Endothelial cell of umbilical vein (primary cell): ENCODE measurements at regions of chr1 and their contacts with region 1.

Region 1: GRCh38 chr1:21931171-21932093 is 5.7 kb downstream of the HSPG2 start:
- DNase-seq: peak; percentile 70
- H3K4me3 ChIP-seq: peak overlapping the region in 2 of 3 experiments; percentile 71 to 88
- H3K27ac ChIP-seq: peak overlapping the region; percentile 81
- H3K4me1 ChIP-seq: peaks cover 70% of the 10 kb centered on the region
- H3K27me3 ChIP-seq: no peaks in the 10 kb centered on the region
- CTCF ChIP-seq: no peak
- POLR2A ChIP-seq: no peak

Region 2: GRCh38 chr1:21901473-21901847 is 30.0 kb before region 1 on chr1:
- CTCF ChIA-PET with region 1: interaction called, 3 read pairs
- POLR2A ChIA-PET with region 1: interaction called, 6 read pairs
- dilution Hi-C with region 1: no loop called
- intact Hi-C with region 1: loop called (anchors 1 kb)
- DNase-seq: peak; percentile 81
- H3K4me3 ChIP-seq: no peak overlapping the region
- H3K27ac ChIP-seq: peak overlapping the region; percentile 87
- H3K4me1 ChIP-seq: peaks cover 92% of the 10 kb centered on the region
- H3K27me3 ChIP-seq: no peaks in the 10 kb centered on the region
- CTCF ChIP-seq: peak; percentile 18 to 46
- POLR2A ChIP-seq: no peak

Region 3: GRCh38 chr1:21909787-21910503 is 21.5 kb before region 1 on chr1:
- CTCF ChIA-PET with region 1: interaction called, 4 read pairs
- POLR2A ChIA-PET with region 1: interaction called, 15 read pairs
- dilution Hi-C with region 1: no loop called
- intact Hi-C with region 1: no loop called
- DNase-seq: peak; percentile 96
- H3K4me3 ChIP-seq: no peak overlapping the region
- H3K27ac ChIP-seq: peak overlapping the region; percentile 94
- H3K4me1 ChIP-seq: peaks cover 95% of the 10 kb centered on the region
- H3K27me3 ChIP-seq: no peaks in the 10 kb centered on the region
- CTCF ChIP-seq: no peak
- POLR2A ChIP-seq: peak; percentile 88

Region 4: DNA sequence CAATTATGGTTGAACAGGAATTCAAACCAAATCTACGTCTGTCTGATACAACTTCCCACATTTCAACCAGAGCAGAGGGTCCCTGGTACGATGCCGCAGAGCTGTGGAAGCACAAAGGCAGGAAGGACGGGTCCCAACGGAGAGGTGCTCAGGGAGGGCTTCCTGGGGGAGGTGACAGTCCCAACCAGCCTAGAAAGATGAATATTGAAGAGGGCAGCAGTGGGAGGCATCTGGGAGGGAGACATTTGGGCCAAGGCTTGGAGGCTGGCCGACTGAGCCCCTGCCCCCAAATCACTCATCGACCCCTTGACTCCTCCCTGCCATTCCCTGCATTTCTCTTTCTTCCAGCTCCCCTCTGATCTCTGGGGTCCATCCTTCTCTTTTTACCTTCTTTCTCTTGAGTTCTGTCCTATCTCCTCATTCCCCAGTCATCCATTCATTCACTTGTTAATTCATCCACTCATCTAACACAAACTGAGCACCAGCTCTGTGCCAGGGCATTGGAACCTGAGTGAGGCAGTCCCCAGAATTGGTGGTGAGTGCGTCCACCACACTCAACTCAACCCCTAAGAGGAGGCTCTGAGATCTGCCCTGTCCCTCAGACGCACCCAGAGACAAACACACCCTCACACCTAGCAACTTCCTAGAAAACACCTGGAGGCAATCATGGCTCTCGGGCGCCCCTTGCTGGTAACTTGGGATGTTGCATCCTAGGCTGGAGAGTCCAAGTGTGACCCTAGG is 32.2 kb after region 1 on chr1:
- CTCF ChIA-PET with region 1: interaction called, 95 read pairs
- POLR2A ChIA-PET with region 1: interaction called, 3 read pairs
- dilution Hi-C with region 1: no loop called
- intact Hi-C with region 1: loop called (anchors 1 kb)
- DNase-seq: peak; percentile 81
- H3K4me3 ChIP-seq: no peak overlapping the region
- H3K27ac ChIP-seq: peak overlapping the region; percentile 1
- H3K4me1 ChIP-seq: peaks cover 26% of the 10 kb centered on the region
- H3K27me3 ChIP-seq: no peaks in the 10 kb centered on the region
- CTCF ChIP-seq: peak; percentile 85 to 91
- POLR2A ChIP-seq: peak; percentile 29

Region 5: DNA sequence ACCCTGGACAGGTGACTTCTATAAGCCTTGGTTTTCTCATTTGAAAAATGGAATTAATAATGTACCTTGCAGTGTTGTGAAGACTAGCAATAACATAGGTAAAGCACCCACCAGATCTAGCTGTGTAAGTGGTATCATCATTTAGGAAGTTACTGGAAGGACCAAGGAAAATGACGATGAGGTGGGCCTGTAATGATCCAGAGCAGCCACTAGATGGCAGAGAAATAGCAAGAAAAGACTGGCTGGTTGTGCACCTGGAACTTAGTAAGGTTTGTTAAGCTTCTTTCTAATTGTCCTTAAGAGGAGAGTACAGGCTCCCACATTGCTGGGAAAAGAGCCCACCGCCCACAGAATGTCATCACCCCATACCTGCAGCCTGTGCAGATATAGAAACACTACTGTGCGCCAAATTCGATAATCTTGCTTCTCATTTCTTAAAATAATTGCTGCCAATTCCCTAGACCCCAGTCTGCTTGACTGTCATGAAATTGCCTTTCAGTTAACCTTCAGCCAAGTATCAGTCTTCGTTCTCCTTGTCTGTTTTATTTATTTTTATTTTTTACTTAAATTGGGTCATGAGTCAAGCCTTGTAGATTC is 174.3 kb after region 1 on chr1:
- CTCF ChIA-PET with region 1: no interaction called
- POLR2A ChIA-PET with region 1: no interaction called
- dilution Hi-C with region 1: no loop called
- intact Hi-C with region 1: no loop called
- DNase-seq: peak; percentile 62
- H3K4me3 ChIP-seq: no peak overlapping the region
- H3K27ac ChIP-seq: no peak overlapping the region
- H3K4me1 ChIP-seq: peaks cover 14% of the 10 kb centered on the region
- H3K27me3 ChIP-seq: no peaks in the 10 kb centered on the region
- CTCF ChIP-seq: peak; percentile 66 to 76
- POLR2A ChIP-seq: no peak